ENCODE measurements at regions of chr11 and their contacts with region 1.

Region 1: DNA sequence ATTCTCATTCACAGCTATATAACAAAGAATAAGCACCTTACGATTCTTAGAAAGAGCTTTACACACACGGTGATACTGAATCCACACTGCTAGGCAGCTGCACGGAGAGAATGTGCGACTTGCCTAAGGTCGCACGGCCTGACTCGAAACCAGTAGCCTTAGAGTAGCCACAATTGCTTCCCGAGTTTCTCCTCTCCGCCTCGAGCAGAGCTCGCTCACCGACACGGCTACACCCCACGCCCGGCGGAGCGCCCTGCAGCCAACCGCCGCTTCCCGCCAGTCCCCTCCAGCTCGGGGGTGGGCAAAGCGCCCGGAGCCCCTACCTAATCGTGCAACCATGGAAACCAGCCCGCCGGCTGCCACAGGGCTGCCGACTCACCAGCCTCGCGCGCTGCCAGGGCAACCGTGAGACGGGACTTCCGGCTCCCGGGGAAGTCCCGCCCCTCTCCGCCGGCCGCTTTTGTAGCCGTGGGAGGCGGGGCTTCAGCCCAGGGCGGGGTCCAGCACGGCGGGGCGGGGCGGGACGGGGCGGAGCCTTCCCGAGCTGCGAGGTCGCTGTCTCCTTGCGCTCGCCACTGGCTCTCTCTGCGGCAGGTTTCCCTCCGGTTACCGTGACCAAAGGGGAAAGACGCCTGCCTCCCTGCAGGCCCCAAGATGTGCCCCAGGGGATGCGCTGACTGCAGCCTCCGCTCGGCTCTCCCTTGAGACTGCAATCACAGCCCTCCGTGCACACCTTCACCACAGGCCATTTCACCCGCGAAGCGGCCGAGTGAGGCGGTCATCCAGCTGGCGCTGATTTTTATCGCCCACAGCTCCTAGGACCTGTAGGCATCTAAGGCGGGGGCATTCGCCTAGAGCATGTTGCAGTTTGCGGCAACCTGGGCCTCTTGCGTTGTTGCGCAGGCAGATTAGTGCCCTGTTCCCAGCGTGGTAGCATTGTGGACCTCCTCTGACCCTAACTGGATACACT is 1.1 kb downstream of the BSCL2 start:
- DNase-seq: peak; percentile 90 to 95 (median 91)
- H3K4me3 ChIP-seq: peak overlapping the region; percentile 69 to 86
- H3K4me3 Mint-ChIP-seq: peak overlapping the region; percentile 86 to 95 (median 89)
- H3K27ac ChIP-seq: peak overlapping the region; percentile 78
- H3K27ac Mint-ChIP-seq: peak overlapping the region; percentile 91 to 98 (median 94)
- H3K4me1 ChIP-seq: peaks cover 50% of the 10 kb centered on the region
- H3K4me1 Mint-ChIP-seq: peaks cover 21 to 51% (median 36%) of the 10 kb centered on the region in 4 donors
- H3K27me3 ChIP-seq: no peaks in the 10 kb centered on the region
- H3K27me3 Mint-ChIP-seq: no peaks in the 10 kb centered on the region

Region 2: GRCh38 chr11:62556108-62556871 is 149.9 kb before region 1 on chr11:
- CTCF ChIA-PET with region 1: no interaction called
- POLR2A ChIA-PET with region 1: interaction called, 10 read pairs
- intact Hi-C with region 1: no loop called
- DNase-seq: peak; percentile 85 to 97 (median 87)
- H3K4me3 ChIP-seq: peak overlapping the region; percentile 37 to 75
- H3K4me3 Mint-ChIP-seq: peak overlapping the region; percentile 82 to 91 (median 90)
- H3K27ac ChIP-seq: peak overlapping the region; percentile 95
- H3K27ac Mint-ChIP-seq: peak overlapping the region; percentile 98 to 100 (median 100)
- H3K4me1 ChIP-seq: peaks cover 98% of the 10 kb centered on the region
- H3K4me1 Mint-ChIP-seq: peaks cover 73 to 97% (median 85%) of the 10 kb centered on the region in 4 donors
- H3K27me3 ChIP-seq: no peaks in the 10 kb centered on the region
- H3K27me3 Mint-ChIP-seq: peaks cover 0 to 2% of the 10 kb centered on the region in 2 donors

Region 3: DNA sequence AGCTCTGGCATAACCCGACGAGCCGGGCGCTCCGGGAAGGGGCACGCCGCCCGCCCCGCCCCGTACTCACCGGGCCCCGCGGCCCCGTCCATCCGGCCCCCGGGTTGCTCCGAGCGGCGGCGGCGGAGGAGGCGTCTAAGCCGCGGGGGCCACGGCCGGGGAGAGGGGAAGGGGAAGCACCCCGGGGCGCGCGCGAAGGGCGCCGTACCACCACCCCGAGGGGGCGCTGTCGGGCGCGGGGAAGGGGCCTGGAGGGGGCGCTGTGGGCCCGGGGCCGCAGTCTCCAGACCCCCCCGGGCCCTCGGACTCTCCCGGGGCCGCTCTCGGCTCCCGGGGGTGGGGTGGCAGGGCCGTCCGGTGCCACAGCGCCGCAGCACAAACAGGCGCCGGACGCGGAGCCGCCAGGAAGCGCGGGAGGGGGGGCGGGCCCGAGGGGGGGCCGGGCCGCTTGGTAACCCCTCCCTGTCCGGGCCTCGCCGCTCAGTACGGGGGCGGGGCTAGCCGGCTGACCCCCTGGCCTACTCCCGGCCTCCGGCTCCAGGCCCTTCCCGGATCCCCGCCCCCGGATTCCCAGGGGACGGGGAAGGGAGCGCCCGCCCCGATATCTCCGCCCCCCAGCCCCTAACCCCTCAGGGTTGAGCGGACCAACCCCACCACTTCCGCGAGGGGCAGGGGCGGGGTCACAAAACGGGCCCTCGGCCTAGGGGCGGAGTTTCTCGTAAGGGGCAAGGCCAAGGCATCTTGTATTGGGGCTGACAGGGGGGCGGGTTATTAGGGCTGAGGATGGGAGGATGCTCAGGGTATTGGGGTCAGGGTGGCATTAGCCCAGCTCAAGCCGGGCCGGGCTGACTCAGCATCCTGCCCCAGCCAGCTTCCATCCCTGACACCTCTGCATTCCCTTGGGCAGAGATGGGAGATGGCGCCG is 93.5 kb before region 1 on chr11 and contains the starts of genes EML3 and ROM1:
- CTCF ChIA-PET with region 1: no interaction called
- POLR2A ChIA-PET with region 1: interaction called, 13 read pairs
- intact Hi-C with region 1: no loop called
- DNase-seq: peak; percentile 85 to 88 (median 86)
- H3K4me3 ChIP-seq: peak within 1 kb of the TSS; percentile 73 to 93
- H3K4me3 Mint-ChIP-seq: peak within 1 kb of the TSS; percentile 89 to 100 (median 96)
- H3K27ac ChIP-seq: peak within 1 kb of the TSS; percentile 90
- H3K27ac Mint-ChIP-seq: peak within 1 kb of the TSS; percentile 94 to 98 (median 96)
- H3K4me1 ChIP-seq: peaks cover 59% of the 10 kb centered on the region
- H3K4me1 Mint-ChIP-seq: peaks cover 15 to 53% (median 38%) of the 10 kb centered on the region in 4 donors
- H3K27me3 ChIP-seq: no peaks in the 10 kb centered on the region
- H3K27me3 Mint-ChIP-seq: no peaks in the 10 kb centered on the region
- total RNA-seq, gene EML3: 192 to 201 TPM
- total RNA-seq, gene ROM1: 1.6 to 1.9 TPM

Region 4: DNA sequence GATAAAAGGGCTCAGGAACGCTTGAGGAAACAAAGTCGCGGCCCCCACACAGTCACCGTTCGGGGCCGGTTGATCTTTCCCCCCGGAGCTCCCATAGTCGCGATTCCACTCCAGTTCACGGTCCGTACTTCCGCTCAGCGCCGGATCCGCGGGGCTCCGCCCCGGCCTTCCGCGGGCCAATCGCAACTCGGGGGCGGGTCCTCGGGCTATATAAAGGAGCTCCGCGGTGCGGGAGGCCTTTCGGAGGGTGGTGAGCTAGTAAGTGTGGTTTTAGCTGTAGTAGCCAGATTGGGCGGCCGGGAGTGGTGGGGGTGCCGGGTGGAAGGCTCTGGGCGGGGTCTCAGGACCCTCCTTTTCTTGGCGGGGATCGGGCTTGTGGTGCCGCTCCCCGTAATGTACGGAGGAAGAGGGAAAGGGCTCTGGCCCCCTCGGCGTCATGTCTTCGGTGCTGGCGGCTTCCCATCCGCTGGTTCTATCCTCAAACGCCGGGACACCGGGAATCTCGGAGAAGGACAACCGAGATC is 41.0 kb before region 1 on chr11 and contains the starts of genes C11orf98 and CSKMT:
- CTCF ChIA-PET with region 1: interaction called, 3 read pairs
- POLR2A ChIA-PET with region 1: interaction called, 80 read pairs
- intact Hi-C with region 1: loop called (anchors 1 kb)
- DNase-seq: peak; percentile 94 to 96 (median 95)
- H3K4me3 ChIP-seq: peak within 1 kb of the TSS; percentile 88 to 97
- H3K4me3 Mint-ChIP-seq: peak within 1 kb of the TSS; percentile 92 to 98 (median 96)
- H3K27ac ChIP-seq: peak within 1 kb of the TSS; percentile 73
- H3K27ac Mint-ChIP-seq: peak within 1 kb of the TSS; percentile 95 to 98 (median 96)
- H3K4me1 ChIP-seq: peaks cover 42% of the 10 kb centered on the region
- H3K4me1 Mint-ChIP-seq: peaks cover 15 to 55% (median 31%) of the 10 kb centered on the region in 4 donors
- H3K27me3 ChIP-seq: no peaks in the 10 kb centered on the region
- H3K27me3 Mint-ChIP-seq: no peaks in the 10 kb centered on the region
- total RNA-seq, gene C11orf98: 48.9 to 53.1 TPM
- total RNA-seq, gene CSKMT: 31.4 to 32.3 TPM

Region 5: GRCh38 chr11:62694455-62695167 is 11.6 kb before region 1 on chr11:
- CTCF ChIA-PET with region 1: interaction called, 12 read pairs
- POLR2A ChIA-PET with region 1: interaction called, 7 read pairs
- intact Hi-C with region 1: no loop called
- DNase-seq: peak; percentile 73 to 80 (median 74)
- H3K4me3 ChIP-seq: no peak overlapping the region
- H3K4me3 Mint-ChIP-seq: no peak overlapping the region
- H3K27ac ChIP-seq: no peak overlapping the region
- H3K27ac Mint-ChIP-seq: peak overlapping the region in 4 of 7 donors; percentile 7 to 77 (median 56)
- H3K4me1 ChIP-seq: no peaks in the 10 kb centered on the region
- H3K4me1 Mint-ChIP-seq: peaks cover 5 to 7% (median 6%) of the 10 kb centered on the region in 4 donors
- H3K27me3 ChIP-seq: no peaks in the 10 kb centered on the region
- H3K27me3 Mint-ChIP-seq: no peaks in the 10 kb centered on the region

Region 6: GRCh38 chr11:62771144-62772021 is 65.2 kb after region 1 on chr11 and contains the start of gene TAF6L:
- CTCF ChIA-PET with region 1: interaction called, 4 read pairs
- POLR2A ChIA-PET with region 1: interaction called, 29 read pairs
- intact Hi-C with region 1: no loop called
- DNase-seq: peak; percentile 86 to 92 (median 88)
- H3K4me3 ChIP-seq: peak within 1 kb of the TSS; percentile 67 to 83
- H3K4me3 Mint-ChIP-seq: peak within 1 kb of the TSS; percentile 87 to 97 (median 92)
- H3K27ac ChIP-seq: peak within 1 kb of the TSS; percentile 82
- H3K27ac Mint-ChIP-seq: peak within 1 kb of the TSS; percentile 92 to 99 (median 97)
- H3K4me1 ChIP-seq: peaks cover 24% of the 10 kb centered on the region
- H3K4me1 Mint-ChIP-seq: peaks cover 14 to 32% (median 22%) of the 10 kb centered on the region in 4 donors
- H3K27me3 ChIP-seq: no peaks in the 10 kb centered on the region
- H3K27me3 Mint-ChIP-seq: no peaks in the 10 kb centered on the region
- total RNA-seq, gene TAF6L: 26.3 to 34.0 TPM

Region 7: DNA sequence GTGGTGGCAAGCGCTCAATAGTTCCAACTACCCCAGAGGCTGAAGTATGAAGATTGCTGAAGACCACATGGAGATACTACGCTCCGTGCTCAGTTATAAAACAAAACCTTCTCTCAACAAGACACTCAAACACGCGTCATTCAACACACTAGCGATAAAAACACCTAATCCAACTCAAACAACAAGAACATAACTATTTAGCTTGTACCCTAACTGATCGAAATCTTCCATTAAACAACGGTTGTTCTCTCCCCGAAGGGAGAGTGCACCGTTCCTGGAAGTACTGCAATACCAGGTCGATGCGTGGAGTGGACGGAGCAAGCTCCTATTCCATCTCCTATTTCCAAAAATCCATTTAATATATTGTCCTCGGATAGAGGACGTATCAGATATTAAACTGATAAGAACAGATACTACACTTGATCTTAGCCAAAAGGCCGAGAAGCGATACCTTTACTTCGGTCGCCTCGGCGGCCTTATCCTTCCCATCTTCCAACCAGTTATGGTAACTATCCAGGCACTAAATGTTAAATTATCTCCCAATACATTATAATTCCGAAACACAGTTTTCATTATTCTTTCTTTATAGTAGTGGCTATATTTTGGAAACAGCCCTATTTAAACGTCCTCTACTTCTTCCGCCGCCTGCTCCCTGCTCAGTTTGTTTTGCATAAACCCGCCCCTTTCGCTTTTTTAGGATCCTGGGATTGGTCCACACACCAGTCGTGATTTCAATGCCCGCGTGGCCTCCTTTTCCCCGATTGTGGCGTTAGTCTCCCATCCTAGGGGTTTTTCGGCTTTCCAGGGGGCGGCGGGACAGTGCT is 135.4 kb after region 1 on chr11:
- CTCF ChIA-PET with region 1: no interaction called
- POLR2A ChIA-PET with region 1: interaction called, 102 read pairs
- intact Hi-C with region 1: loop called (anchors 2 kb)
- DNase-seq: peak; percentile 88 to 92 (median 90)
- H3K4me3 ChIP-seq: peak overlapping the region; percentile 74 to 86
- H3K4me3 Mint-ChIP-seq: no peak overlapping the region
- H3K27ac ChIP-seq: peak overlapping the region; percentile 98
- H3K27ac Mint-ChIP-seq: no peak overlapping the region
- H3K4me1 ChIP-seq: peaks cover 32% of the 10 kb centered on the region
- H3K4me1 Mint-ChIP-seq: peaks cover 10 to 34% (median 21%) of the 10 kb centered on the region in 4 donors
- H3K27me3 ChIP-seq: no peaks in the 10 kb centered on the region
- H3K27me3 Mint-ChIP-seq: no peaks in the 10 kb centered on the region

Measured in CD4-positive, alpha-beta memory T cell (primary cell).